HEK293T (cell line): ENCODE measurements at regions of chr4 and their contacts with region 1.

Region 1: GRCh38 chr4:177441803-177442622 is at the start of gene AGA:
- DNase-seq: peak; percentile 92

Region 2: DNA sequence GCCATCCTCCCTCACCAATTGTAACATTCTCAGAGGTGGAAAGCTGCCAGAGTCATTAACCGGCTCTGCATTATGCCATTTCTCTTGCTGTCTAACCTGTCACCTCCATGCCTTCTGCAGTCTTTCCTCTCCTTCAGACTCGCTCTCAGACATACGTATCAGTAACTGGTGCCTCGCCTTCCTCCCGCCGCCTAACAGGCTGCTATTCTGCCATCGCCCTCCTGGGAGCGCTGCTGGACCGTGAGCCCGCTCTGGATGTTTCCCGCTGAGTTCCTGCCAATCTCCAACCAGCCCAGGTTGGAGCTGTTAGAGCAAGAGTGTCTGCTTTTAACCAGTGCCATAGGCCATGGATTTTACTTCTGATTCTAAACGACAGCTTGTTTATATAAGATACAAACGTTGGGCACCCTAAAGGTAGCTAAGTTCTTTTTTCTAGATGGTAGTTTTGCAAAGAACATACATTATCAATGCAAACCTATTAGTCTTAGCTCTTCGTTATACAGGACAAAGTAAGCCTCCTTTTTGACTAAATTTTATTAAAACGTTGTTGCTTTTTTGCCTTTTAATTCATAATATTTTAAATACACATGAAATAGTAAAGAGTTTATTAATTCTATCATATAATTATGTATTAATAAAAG is 191.8 kb before region 1 on chr4:
- CTCF ChIA-PET with region 1: no interaction called
- POLR2A ChIA-PET with region 1: interaction called, 11 read pairs
- DNase-seq: peak; percentile 81

Region 3: DNA sequence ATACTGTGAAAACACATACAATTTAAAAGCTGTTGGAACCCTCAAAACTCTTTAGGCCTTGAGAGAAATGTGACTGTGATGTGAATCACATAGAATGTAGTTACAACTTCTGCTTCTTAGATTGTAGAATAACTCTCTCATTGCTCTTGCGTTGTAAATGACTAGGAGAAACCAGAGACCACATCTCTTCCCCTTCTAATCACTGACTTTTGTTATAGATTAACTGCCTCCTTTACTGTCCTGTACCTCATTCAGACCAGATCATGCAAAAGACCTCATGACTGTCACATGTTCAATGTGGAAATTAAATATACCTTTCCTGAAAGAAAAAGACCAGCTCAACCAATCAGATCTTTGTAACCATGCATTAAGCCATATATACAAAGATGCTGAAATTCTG is 175.5 kb before region 1 on chr4:
- CTCF ChIA-PET with region 1: no interaction called
- POLR2A ChIA-PET with region 1: no interaction called
- DNase-seq: no peak

Region 4: DNA sequence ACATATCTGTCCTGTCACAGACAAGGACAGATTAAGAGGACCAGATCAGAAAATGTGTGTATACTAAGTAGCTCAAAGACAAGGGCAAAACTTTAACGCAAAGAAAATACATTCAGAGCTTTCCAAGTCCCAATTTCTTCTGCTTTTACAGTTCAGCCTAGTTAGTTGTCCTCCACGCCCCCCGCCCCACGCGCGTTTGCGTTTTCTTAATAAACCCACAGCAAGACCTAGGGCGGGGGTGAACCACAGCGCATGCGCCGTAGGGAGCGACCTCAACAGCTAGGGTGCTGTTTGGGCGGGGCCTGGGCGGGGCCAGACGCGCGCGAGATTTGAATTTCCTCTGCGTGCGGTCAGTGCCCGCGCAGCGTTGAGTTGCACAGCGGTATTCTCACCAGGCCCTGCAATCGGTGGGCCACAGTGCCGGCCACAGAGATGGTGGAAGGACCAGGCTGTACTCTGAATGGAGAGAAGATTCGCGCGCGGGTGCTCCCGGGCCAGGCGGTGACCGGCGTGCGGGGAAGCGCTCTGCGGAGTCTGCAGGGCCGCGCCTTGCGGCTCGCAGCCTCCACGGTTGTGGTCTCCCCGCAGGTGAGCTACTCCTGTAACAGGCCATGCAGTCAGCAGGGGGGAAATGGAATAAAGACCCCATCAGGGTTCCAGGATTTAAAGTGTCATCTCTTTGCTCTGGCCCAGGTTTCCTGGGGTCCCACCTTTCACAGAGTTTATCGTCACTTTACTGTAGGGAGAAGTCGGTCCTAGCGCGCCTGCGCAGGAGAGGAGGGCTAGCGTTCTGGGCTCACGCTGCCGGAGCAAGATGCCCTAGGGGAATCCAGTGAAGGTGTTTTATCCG is 132.3 kb before region 1 on chr4 and contains the start of gene NEIL3:
- CTCF ChIA-PET with region 1: no interaction called
- POLR2A ChIA-PET with region 1: interaction called, 14 read pairs
- DNase-seq: peak; percentile 92

Region 5: GRCh38 chr4:177427192-177427591 is 14.8 kb before region 1 on chr4:
- CTCF ChIA-PET with region 1: no interaction called
- POLR2A ChIA-PET with region 1: interaction called, 10 read pairs
- DNase-seq: no peak

Region 6: DNA sequence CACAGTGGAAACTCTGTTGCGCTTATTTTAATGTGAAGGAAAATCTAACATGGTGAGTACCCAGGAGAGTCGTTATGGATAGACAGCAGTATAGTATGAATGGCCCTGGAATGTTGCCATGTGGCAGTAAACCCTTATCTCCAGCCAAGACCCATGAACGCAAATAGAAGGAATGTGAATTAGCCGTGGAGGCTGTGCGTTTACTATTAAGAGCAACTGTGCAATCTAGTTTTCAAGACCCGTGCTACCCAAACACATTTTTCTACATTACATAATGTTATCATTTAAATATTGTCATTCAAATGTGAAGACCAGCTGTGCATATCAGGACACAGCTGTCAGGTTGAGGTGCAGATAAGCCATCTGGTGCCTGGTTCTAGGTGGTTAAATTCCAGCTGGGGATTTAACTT is 13.6 kb after region 1 on chr4:
- CTCF ChIA-PET with region 1: no interaction called
- POLR2A ChIA-PET with region 1: interaction called, 50 read pairs
- DNase-seq: peak; percentile 48

Region 7: GRCh38 chr4:177461606-177462005 is 19.6 kb after region 1 on chr4:
- CTCF ChIA-PET with region 1: no interaction called
- POLR2A ChIA-PET with region 1: interaction called, 50 read pairs
- DNase-seq: no peak

Region 8: GRCh38 chr4:177509181-177509745 is 67.2 kb after region 1 on chr4:
- CTCF ChIA-PET with region 1: no interaction called
- POLR2A ChIA-PET with region 1: interaction called, 12 read pairs
- DNase-seq: no peak